Prostate gland (tissue), 2 donors: ENCODE measurements at regions of chr20 and their contacts with region 1.

Region 1: DNA sequence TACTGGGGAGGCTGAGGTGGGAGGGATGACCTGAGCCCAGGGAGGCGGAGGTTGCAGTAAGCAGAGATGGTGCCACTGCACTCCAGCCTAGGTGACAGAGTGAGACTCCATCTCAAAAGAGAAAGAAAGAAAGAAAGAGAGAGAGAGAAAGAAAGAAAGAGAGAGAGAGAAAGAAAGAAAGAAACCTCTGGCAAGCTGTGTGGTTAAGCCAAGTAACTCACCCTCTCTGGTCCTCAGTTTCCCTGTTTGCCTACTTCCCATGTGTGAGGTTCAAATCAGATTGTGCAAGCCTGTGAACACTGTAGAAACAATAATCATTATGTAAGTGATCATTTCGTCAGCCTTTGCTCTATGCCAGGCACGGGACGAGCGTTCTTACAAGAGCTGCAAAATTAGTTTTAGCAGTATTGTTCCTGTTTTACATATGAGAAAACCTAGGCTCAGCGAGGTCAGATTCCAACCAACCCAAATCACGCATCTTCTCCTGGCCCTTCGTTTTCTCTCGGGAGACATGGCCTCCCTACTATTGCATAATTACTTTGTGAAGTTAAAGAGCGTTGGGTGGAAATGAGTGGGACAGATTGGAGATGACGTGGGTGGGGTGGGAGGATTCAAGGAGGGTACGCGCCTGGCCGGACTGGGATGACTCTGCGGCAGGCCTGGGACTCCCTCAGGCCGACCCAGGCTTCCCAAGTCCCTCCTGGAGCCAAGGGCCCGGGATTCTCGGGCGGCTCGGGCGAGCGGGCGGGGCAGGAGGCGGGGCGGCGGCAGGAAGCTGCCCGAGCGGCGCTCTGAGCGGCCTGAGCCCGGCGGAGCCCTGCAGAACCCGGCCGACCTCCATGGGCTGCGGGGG is at the start of gene SNX21:
- DNase-seq: peak; percentile 49
- H3K4me3 ChIP-seq: peak within 1 kb of the TSS; percentile 55 to 66
- H3K27ac ChIP-seq: peak within 1 kb of the TSS; percentile 90
- H3K4me1 ChIP-seq: peaks cover 8% of the 10 kb centered on the region
- H3K27me3 ChIP-seq: no peaks in the 10 kb centered on the region
- CTCF ChIP-seq: no peak
- POLR2A ChIP-seq: no peak
- total RNA-seq, gene SNX21: 60.4 to 68.4 TPM

Region 2: GRCh38 chr20:45436732-45437391 is 396.4 kb before region 1 on chr20:
- intact Hi-C with region 1: no loop called
- DNase-seq: peak; percentile 79
- H3K4me3 ChIP-seq: peak overlapping the region; percentile 38 to 49
- H3K27ac ChIP-seq: peak overlapping the region; percentile 48 to 75
- H3K4me1 ChIP-seq: no peaks in the 10 kb centered on the region
- H3K27me3 ChIP-seq: no peaks in the 10 kb centered on the region
- CTCF ChIP-seq: peak; percentile 85 to 97 (median 95)
- POLR2A ChIP-seq: no peak

Region 3: DNA sequence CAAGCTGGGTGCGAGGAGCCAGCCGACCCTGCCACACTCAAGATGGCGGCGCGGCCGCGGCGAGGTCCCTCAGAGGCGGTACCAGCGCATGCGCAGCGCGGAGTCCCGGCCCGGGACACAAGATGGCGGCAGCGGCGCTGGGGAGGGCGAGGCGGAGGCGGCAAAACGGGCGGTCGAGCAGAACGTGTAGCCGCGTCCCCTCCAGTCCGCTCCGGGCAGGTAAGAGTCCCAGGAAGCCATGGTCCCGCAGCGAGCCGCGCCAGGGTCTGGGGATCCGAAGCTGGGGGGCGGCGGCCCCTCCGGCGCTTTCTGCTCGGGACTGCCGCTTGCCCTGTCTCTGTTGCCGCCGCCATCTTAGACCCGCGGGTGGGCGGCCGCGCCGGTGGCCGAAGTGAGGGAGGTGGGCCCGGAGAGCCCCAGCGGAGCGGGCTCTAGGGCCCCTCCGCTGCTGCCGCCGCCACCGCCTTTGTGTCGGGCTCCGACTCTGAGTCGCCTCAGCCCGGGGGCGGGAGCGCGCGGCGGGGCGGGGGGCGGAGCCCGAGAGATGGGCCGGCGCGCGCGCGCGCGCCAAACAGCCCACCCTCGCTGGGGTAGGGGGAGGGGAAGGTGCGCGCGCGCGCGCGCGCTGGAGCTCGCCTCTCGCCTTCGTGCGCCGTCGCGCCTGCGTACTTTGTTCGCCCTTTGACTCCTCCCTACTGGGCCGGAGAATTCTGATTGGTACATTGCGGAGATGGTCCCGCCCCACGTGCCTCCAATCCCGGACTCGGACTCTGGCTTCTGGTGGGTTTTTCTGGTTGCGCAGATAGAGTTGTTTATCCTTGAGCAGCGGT is 101.5 kb after region 1 on chr20 and contains the start of gene PCIF1:
- intact Hi-C with region 1: loop called (anchors 5 kb)
- DNase-seq: peak; percentile 98
- H3K4me3 ChIP-seq: peak within 1 kb of the TSS; percentile 90 to 100
- H3K27ac ChIP-seq: peak within 1 kb of the TSS; percentile 99 to 100
- H3K4me1 ChIP-seq: no peaks in the 10 kb centered on the region
- H3K27me3 ChIP-seq: no peaks in the 10 kb centered on the region
- CTCF ChIP-seq: peak in 2 of 4 experiments; percentile 36 to 46
- POLR2A ChIP-seq: peak; percentile 92
- total RNA-seq, gene PCIF1: 39.8 to 54.9 TPM